IMR-90 (cell line): ENCODE measurements at regions of chrX and their contacts with region 1.

Region 1: GRCh38 chrX:41561045-41561444 is 113.9 kb downstream of the NYX start:
- DNase-seq: peak; percentile 95
- ATAC-seq: peak; percentile 80
- H3K4me3 ChIP-seq: no peak overlapping the region
- H3K27ac ChIP-seq: peak overlapping the region; percentile 69; the same call in 1 of the 2 replicates
- H3K4me1 ChIP-seq: peaks cover 3% of the 10 kb centered on the region
- H3K27me3 ChIP-seq: no peaks in the 10 kb centered on the region; the same call in 1 of the 2 replicates
- CTCF ChIP-seq: no peak
- POLR2A ChIP-seq: no peak
- RAD21 ChIP-seq: no peak

Region 2: GRCh38 chrX:41275661-41276609 is 285.1 kb before region 1 on chrX:
- CTCF ChIA-PET with region 1: no interaction called
- POLR2A ChIA-PET with region 1: no interaction called
- dilution Hi-C with region 1: no loop called
- in situ Hi-C with region 1: no loop called
- intact Hi-C with region 1: loop called (anchors 10 kb)
- DNase-seq: peak; percentile 57
- ATAC-seq: peak; percentile 90
- H3K4me3 ChIP-seq: peak overlapping the region; percentile 57
- H3K27ac ChIP-seq: peak overlapping the region; percentile 57
- H3K4me1 ChIP-seq: peaks cover 2% of the 10 kb centered on the region; the same call in 1 of the 2 replicates
- H3K27me3 ChIP-seq: peaks cover 3% of the 10 kb centered on the region; the same call in 1 of the 2 replicates
- CTCF ChIP-seq: peak; percentile 60
- POLR2A ChIP-seq: no peak
- RAD21 ChIP-seq: peak; percentile 75

Region 3: GRCh38 chrX:41499984-41500383 is 61.1 kb before region 1 on chrX:
- CTCF ChIA-PET with region 1: no interaction called
- POLR2A ChIA-PET with region 1: no interaction called
- dilution Hi-C with region 1: no loop called
- in situ Hi-C with region 1: no loop called
- intact Hi-C with region 1: no loop called
- DNase-seq: no peak
- ATAC-seq: no peak
- H3K4me3 ChIP-seq: no peak overlapping the region
- H3K27ac ChIP-seq: no peak overlapping the region
- H3K4me1 ChIP-seq: no peaks in the 10 kb centered on the region
- H3K27me3 ChIP-seq: peaks cover 3% of the 10 kb centered on the region; the same call in 1 of the 2 replicates
- CTCF ChIP-seq: no peak
- POLR2A ChIP-seq: no peak
- RAD21 ChIP-seq: no peak

Region 4: DNA sequence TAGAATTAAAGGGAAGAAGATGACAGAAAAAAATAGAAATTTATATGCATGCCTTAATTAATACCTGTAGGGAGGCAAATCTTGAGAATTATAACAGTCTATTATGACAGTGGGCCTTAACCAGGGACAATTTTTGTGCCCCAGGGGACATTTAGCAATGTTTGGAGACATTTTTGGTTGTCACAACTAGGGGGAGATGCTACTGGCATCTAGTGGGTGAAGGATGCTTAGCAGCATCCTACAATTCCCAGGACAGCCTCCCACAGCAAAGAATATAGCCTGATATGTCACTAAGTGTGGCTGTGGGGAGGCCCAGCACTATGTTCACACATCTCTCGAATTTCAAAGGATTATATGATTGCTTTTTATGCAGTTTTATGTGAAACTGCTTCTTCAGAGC is 173.5 kb after region 1 on chrX:
- CTCF ChIA-PET with region 1: no interaction called
- POLR2A ChIA-PET with region 1: no interaction called
- dilution Hi-C with region 1: no loop called
- in situ Hi-C with region 1: no loop called
- intact Hi-C with region 1: loop called (anchors 10 kb)
- DNase-seq: peak; percentile 20
- ATAC-seq: peak; percentile 54
- H3K4me3 ChIP-seq: no peak overlapping the region
- H3K27ac ChIP-seq: no peak overlapping the region
- H3K4me1 ChIP-seq: no peaks in the 10 kb centered on the region
- H3K27me3 ChIP-seq: no peaks in the 10 kb centered on the region; the same call in 1 of the 2 replicates
- CTCF ChIP-seq: peak; percentile 43
- POLR2A ChIP-seq: no peak
- RAD21 ChIP-seq: peak; percentile 56

Region 5: DNA sequence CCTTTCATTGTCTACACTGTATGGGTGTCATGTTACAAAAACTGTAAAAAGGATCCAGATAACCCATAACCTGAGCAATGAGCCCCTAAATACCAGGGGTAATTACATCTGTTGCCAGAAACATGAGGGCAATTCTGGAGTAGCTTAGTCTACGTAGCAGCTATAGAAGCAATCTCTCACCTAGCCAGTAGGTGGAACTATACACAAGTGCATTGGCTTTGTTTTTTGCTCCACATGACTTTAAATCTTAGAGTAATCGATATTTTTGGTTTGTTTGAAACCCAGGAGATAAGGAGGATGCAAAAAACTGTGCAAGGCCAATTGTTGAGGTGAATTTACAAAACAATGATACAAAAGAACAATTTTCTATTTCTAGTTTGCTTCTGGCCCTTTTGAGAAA is 220.5 kb after region 1 on chrX:
- CTCF ChIA-PET with region 1: no interaction called
- POLR2A ChIA-PET with region 1: interaction called, 3 read pairs
- dilution Hi-C with region 1: no loop called
- in situ Hi-C with region 1: no loop called
- intact Hi-C with region 1: loop called (anchors 5 kb)
- DNase-seq: peak; percentile 56
- ATAC-seq: peak; percentile 56
- H3K4me3 ChIP-seq: no peak overlapping the region
- H3K27ac ChIP-seq: no peak overlapping the region
- H3K4me1 ChIP-seq: peaks cover 3% of the 10 kb centered on the region
- H3K27me3 ChIP-seq: no peaks in the 10 kb centered on the region
- CTCF ChIP-seq: peak; percentile 69
- POLR2A ChIP-seq: 0 out of 2 replicates have a peak, but pooled peaks have one; percentile 23
- RAD21 ChIP-seq: peak; percentile 79

Region 6: DNA sequence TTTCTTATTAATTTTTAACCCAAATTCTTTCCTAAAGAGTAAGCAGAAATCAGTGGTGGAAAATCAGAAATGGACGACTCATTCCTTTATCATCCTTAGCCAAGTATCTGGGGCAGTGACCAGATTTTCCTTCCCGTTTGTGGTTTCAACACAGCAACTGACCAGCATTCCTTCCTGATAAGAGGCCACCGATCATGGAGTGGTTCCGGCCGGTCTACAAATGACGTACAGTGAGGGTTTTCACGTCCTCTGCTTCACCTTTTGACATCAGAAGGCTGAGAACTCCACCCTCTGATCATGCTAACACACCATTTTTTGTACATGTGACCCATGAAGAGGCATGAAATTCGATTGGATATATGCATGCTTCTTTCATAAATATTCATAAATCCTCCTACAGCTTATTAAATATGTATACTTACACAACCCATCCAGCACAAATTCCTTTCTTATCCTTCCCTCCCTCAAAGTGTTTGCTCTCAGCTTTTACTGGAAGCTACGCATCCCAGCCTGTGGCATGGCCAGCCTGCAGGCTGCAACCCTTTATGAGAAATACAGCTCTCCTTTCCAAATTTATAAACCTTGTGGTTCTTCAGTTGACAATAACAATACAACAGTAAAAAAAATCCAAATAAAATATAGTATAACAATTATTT is 535.3 kb after region 1 on chrX:
- CTCF ChIA-PET with region 1: no interaction called
- POLR2A ChIA-PET with region 1: no interaction called
- dilution Hi-C with region 1: no loop called
- in situ Hi-C with region 1: loop called (anchors 25 kb)
- intact Hi-C with region 1: no loop called
- DNase-seq: peak; percentile 96
- ATAC-seq: peak; percentile 85
- H3K4me3 ChIP-seq: no peak overlapping the region
- H3K27ac ChIP-seq: peak overlapping the region; percentile 92
- H3K4me1 ChIP-seq: peaks cover 7% of the 10 kb centered on the region
- H3K27me3 ChIP-seq: no peaks in the 10 kb centered on the region
- CTCF ChIP-seq: no peak
- POLR2A ChIP-seq: no peak
- RAD21 ChIP-seq: no peak